CD8-positive, alpha-beta T cell (primary cell): ENCODE measurements at regions of chr13 and their contacts with region 1.

Region 1: DNA sequence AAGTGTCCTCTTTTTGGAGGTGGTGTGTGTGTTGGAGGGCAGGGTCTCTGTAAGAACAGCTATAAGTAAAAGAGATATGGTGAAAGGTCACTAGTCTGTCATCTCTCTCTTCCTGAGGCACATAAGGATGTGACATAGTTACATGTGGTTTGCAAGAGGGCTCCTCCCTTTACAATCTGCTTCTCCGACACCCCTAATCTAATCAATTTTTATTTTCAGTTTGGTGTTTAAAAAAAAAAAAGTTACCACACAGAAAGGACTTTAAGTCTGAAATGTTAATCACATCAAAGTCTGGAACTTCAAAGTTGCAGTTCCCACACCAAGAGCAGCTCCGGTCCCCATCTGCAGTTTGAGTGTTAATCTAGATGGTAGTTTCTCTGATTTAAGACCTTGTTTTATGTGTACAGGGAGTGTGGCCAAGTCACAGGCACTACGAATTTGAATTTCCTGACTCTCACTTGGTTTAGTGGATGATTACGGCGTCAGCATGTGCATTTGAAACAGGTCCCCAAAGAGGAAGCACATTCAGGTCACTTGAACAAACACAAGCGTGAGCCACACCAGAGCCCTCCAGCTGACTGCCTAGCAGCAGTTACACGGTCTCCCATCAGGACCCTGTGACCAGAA is 53.1 kb downstream of the FOXO1 start:
- DNase-seq: peak; percentile 25 to 89 (median 60)
- ATAC-seq: peak; percentile 84
- H3K4me3 ChIP-seq: peak overlapping the region; percentile 21
- H3K4me3 Mint-ChIP-seq: peak overlapping the region; percentile 79
- H3K27ac ChIP-seq: peak overlapping the region; percentile 77 to 96
- H3K27ac Mint-ChIP-seq: peak overlapping the region; percentile 92
- H3K4me1 ChIP-seq: peaks cover 97% of the 10 kb centered on the region
- H3K4me1 Mint-ChIP-seq: peaks cover 95% of the 10 kb centered on the region
- H3K27me3 ChIP-seq: no peaks in the 10 kb centered on the region
- H3K27me3 Mint-ChIP-seq: no peaks in the 10 kb centered on the region
- CTCF ChIP-seq: no peak

Region 2: GRCh38 chr13:40597740-40598370 is 15.4 kb before region 1 on chr13:
- CTCF ChIA-PET with region 1: no interaction called
- POLR2A ChIA-PET with region 1: interaction called, 4 read pairs
- intact Hi-C with region 1: loop called in 1 of 2 experiments (anchors 1 kb)
- DNase-seq: no peak
- ATAC-seq: no peak
- H3K4me3 ChIP-seq: no peak overlapping the region
- H3K4me3 Mint-ChIP-seq: peak overlapping the region; percentile 15
- H3K27ac ChIP-seq: no peak overlapping the region
- H3K27ac Mint-ChIP-seq: peak overlapping the region; percentile 88
- H3K4me1 ChIP-seq: peaks cover 96% of the 10 kb centered on the region
- H3K4me1 Mint-ChIP-seq: peaks cover 97% of the 10 kb centered on the region
- H3K27me3 ChIP-seq: no peaks in the 10 kb centered on the region
- H3K27me3 Mint-ChIP-seq: no peaks in the 10 kb centered on the region
- CTCF ChIP-seq: no peak

Region 3: DNA sequence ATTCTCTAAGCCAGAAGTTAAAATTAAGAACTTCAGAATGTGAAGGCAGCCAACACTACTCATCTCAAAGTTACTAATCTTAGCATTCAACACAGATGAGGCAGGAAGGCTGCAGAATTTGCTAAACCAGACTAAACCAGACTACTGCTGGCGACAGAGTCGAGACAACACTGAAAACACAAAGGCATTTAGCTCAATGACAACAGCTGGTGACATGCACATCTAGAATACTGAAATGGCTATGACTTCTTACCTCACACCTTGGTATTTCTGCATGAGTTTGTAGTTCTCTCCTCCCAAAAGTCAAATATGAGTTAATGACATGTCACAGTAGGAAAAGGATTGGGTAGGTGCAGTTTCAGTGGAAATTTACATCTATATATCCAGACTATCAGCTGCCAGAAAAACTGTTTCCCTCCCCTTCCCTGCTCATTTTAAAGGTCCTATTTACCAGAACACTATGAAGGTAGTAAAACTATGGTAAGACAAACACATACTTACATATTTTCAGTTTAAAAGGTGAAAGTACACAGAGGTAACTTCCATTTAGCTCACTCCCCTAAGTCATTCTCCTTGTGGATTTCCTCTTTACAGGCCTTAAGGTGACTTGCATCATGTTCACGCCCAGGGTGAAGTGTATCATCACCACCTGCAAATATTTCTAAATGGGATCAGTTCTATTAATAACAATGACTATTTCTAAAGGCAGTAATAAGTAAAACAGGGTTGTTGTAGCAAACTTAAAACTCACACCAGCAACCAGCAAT is 31.7 kb after region 1 on chr13:
- CTCF ChIA-PET with region 1: interaction called, 3 read pairs
- POLR2A ChIA-PET with region 1: no interaction called
- intact Hi-C with region 1: loop called in 1 of 2 experiments (anchors 5 kb)
- DNase-seq: no peak
- ATAC-seq: peak; percentile 61
- H3K4me3 ChIP-seq: no peak overlapping the region
- H3K4me3 Mint-ChIP-seq: peak overlapping the region; percentile 56
- H3K27ac ChIP-seq: no peak overlapping the region
- H3K27ac Mint-ChIP-seq: peak overlapping the region; percentile 87
- H3K4me1 ChIP-seq: peaks cover 96% of the 10 kb centered on the region
- H3K4me1 Mint-ChIP-seq: peaks cover 94% of the 10 kb centered on the region
- H3K27me3 ChIP-seq: no peaks in the 10 kb centered on the region
- H3K27me3 Mint-ChIP-seq: no peaks in the 10 kb centered on the region
- CTCF ChIP-seq: no peak